ENCODE measurements at regions of chr7 and their contacts with region 1.

Region 1: DNA sequence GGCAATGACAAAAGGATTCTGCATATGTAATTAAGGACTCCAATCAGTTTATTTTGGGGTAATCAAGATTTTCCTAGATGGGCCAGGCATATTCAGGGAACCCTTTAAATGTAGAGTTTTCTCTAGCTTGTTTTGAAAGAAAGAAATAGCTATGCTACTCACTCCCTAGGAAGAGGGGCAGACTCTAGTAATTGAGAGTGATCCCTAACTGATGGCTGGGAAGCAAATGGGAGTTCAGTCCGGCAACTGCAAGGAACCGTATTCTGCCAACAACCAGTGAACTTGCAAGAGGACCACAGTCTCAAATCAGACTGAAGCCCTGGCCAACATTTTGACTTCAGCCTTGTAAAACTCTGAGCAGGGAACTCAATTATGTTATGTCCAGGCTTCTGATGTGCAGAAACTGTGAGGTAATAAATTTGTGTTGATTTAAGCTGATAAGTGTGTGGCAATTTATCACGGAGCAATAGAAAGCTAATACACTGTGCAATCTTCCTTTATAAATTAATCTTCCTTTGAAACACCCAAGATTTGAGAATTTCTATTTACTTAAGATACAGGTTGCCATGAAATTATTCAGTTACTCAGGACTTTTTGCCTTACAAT is 14.0 kb downstream of the AOAH start:
- DNase-seq: no peak
- H3K4me3 ChIP-seq: no peak overlapping the region
- H3K27ac ChIP-seq: no peak overlapping the region
- H3K4me1 ChIP-seq: no peaks in the 10 kb centered on the region
- H3K27me3 ChIP-seq: no peaks in the 10 kb centered on the region; the same call in none of the 2 replicates
- CTCF ChIP-seq: no peak

Region 2: DNA sequence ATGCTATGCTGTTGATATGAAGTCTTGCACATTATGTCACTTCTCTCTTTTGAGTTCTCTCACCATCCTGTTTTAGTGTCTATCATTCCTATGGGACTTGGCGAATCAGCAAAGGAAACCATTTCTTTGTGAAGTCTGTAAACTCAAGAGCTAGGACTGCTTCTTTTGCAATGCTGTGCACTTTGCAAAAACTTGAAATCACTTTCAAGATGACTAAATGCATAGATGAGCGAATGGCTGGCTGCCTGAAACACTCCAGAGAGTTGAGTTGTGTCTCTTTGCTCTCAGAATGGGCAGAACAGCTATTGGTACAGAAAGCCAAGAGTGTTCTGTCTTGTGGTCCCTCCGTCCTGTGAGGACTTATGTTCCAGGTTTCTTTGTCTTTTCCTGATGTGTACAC is 756.7 kb after region 1 on chr7:
- CTCF ChIA-PET with region 1: interaction called, 17 read pairs
- POLR2A ChIA-PET with region 1: no interaction called
- intact Hi-C with region 1: no loop called
- DNase-seq: no peak
- H3K4me3 ChIP-seq: no peak overlapping the region
- H3K27ac ChIP-seq: no peak overlapping the region
- H3K4me1 ChIP-seq: no peaks in the 10 kb centered on the region
- H3K27me3 ChIP-seq: no peaks in the 10 kb centered on the region
- CTCF ChIP-seq: no peak